IMR-90 (cell line): ENCODE measurements at regions of chr2 and their contacts with region 1.

Region 1: GRCh38 chr2:151032741-151033191 is 228.9 kb downstream of the RBM43 start:
- DNase-seq: peak; percentile 100
- ATAC-seq: peak; percentile 85
- H3K4me3 ChIP-seq: no peak overlapping the region
- H3K27ac ChIP-seq: peak overlapping the region; percentile 71; the same call in 1 of the 2 replicates
- H3K4me1 ChIP-seq: peaks cover 5% of the 10 kb centered on the region
- H3K27me3 ChIP-seq: no peaks in the 10 kb centered on the region
- CTCF ChIP-seq: no peak
- POLR2A ChIP-seq: no peak
- RAD21 ChIP-seq: no peak

Region 2: DNA sequence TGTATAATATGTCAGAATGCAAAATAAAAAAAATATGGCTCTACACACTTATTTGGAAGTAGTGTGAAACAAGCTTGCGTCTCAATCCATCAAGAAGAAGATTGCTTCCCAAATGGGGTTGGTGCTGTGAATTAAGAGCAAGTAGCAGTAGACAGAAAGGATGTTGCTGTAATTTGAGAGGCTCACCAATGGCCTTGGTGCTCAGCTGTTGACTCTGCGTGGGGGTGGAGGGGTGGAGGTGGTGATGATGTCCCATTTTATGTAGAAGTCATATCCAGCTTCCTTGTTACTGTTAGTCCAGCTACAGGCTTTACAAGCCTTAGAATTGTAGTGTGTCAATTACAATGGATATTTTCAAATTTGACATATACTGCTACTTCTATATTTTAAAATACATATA is 321.9 kb before region 1 on chr2:
- CTCF ChIA-PET with region 1: no interaction called
- POLR2A ChIA-PET with region 1: no interaction called
- dilution Hi-C with region 1: no loop called
- in situ Hi-C with region 1: no loop called
- intact Hi-C with region 1: loop called (anchors 10 kb)
- DNase-seq: no peak
- ATAC-seq: no peak; the same call in 1 of the 2 replicates
- H3K4me3 ChIP-seq: no peak overlapping the region
- H3K27ac ChIP-seq: no peak overlapping the region
- H3K4me1 ChIP-seq: peaks cover 3% of the 10 kb centered on the region; the same call in 1 of the 2 replicates
- H3K27me3 ChIP-seq: no peaks in the 10 kb centered on the region
- CTCF ChIP-seq: no peak
- POLR2A ChIP-seq: no peak
- RAD21 ChIP-seq: no peak